Psoas muscle (tissue), 8 donors: ENCODE measurements at regions of chr7 and their contacts with region 1.

Region 1: GRCh38 chr7:85041605-85042216 is 145.1 kb downstream of the SEMA3D start:
- DNase-seq: peak; percentile 31 to 56
- ATAC-seq: peak in 1 of 4 donors; percentile 42
- H3K4me3 ChIP-seq: no peak overlapping the region
- H3K27ac ChIP-seq: no peak overlapping the region
- H3K4me1 ChIP-seq: no peaks in the 10 kb centered on the region
- H3K27me3 ChIP-seq: no peaks in the 10 kb centered on the region
- CTCF ChIP-seq: peak; percentile 55

Region 2: DNA sequence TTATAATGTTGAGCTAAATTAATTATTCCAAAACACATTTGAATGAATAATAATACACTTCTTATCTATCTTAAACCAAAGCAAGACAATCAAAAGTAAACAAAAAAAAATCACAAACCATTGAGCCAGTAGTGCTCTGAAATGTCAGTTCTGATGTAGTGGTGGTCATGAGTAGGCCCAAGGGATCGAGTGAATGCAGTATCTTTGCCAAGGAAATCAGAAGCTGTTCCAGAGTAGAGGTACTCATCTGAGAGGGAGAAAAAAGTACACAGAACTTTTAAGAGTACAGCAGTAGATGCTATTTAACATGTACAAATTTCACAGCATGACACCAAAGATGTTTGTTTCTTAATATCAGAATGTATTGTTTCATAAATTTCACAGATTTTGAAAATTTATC is 23.6 kb after region 1 on chr7:
- intact Hi-C with region 1: no loop called
- DNase-seq: no peak
- ATAC-seq: no peak
- H3K4me3 ChIP-seq: no peak overlapping the region
- H3K27ac ChIP-seq: no peak overlapping the region
- H3K4me1 ChIP-seq: no peaks in the 10 kb centered on the region
- H3K27me3 ChIP-seq: no peaks in the 10 kb centered on the region
- CTCF ChIP-seq: no peak

Region 3: GRCh38 chr7:85175217-85175616 is 133.5 kb after region 1 on chr7:
- intact Hi-C with region 1: no loop called
- DNase-seq: no peak
- ATAC-seq: no peak
- H3K4me3 ChIP-seq: no peak overlapping the region
- H3K27ac ChIP-seq: no peak overlapping the region
- H3K4me1 ChIP-seq: no peaks in the 10 kb centered on the region
- H3K27me3 ChIP-seq: no peaks in the 10 kb centered on the region
- CTCF ChIP-seq: no peak

Region 4: DNA sequence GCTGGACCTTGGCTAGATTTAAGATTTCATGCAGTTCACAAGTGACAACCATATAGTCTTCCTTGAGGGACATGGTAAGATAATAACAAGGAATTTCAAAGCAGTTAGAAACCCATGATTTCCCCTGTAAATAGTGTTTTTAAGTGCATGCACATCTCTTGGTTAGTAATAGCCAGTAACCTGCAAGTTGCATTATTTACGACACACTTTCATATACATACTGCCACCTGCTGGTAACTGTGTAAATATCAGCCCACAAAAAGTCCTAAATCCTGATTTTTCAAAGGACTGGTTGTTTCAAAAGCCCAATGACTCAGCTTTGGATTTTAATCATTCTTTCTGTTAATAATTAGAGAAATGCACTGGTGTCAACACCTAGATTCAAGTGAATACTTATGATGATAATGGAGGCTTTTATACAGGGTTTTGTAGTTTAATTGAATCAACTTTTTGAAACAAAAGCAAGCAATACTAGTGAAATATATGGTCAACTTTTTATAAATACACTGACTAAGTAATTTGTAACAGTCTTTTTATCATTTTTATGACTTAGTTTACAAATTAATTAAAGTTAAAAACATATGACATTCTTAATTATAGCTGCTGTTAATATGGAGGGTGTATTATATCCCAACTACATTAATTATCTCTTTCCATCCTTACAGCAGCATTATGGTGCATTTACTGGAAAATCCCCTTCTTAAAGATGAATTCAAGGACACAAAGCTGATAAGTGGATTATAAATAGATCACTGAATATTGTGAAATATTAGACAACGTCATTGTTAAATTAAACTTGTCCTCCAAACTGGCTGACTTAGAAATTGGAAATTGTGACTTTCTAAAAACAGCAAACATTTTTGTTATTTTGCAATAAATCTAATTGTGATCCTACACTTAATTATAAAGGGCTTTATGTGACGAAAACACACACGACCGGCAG is 512.8 kb after region 1 on chr7:
- intact Hi-C with region 1: loop called in 1 of 2 experiments (anchors 5 kb)
- DNase-seq: no peak
- ATAC-seq: no peak
- H3K4me3 ChIP-seq: no peak overlapping the region
- H3K27ac ChIP-seq: no peak overlapping the region
- H3K4me1 ChIP-seq: no peaks in the 10 kb centered on the region
- H3K27me3 ChIP-seq: no peaks in the 10 kb centered on the region
- CTCF ChIP-seq: peak; percentile 55